ENCODE measurements at regions of chr4 and their contacts with region 1.

Region 1: GRCh38 chr4:973431-974397 is at the start of gene DGKQ:
- DNase-seq: peak; percentile 96
- H3K4me3 ChIP-seq: peak within 1 kb of the TSS; percentile 72 to 95 (median 82)
- H3K27ac ChIP-seq: peak within 1 kb of the TSS in 7 of 8 donors; percentile 7 to 77 (median 51)
- H3K4me1 ChIP-seq: peaks cover 13 to 57% (median 37%) of the 10 kb centered on the region in 6 donors
- H3K27me3 ChIP-seq: peaks cover 0 to 5% (median 0%) of the 10 kb centered on the region in 7 donors
- CTCF ChIP-seq: no peak
- POLR2A ChIP-seq: no peak
- total RNA-seq, gene DGKQ: 13.6 to 26.3 (median 17.0) TPM

Region 2: GRCh38 chr4:931960-932712 is 41.6 kb before region 1 on chr4 and contains the starts of genes GAK and TMEM175:
- intact Hi-C with region 1: loop called (anchors 5 kb)
- DNase-seq: peak; percentile 99
- H3K4me3 ChIP-seq: peak within 1 kb of the TSS; percentile 75 to 99 (median 92)
- H3K27ac ChIP-seq: peak within 1 kb of the TSS; percentile 84 to 98 (median 94)
- H3K4me1 ChIP-seq: peaks cover 40 to 89% (median 81%) of the 10 kb centered on the region in 6 donors
- H3K27me3 ChIP-seq: no peaks in the 10 kb centered on the region
- CTCF ChIP-seq: peak in 6 of 11 experiments; percentile 24 to 56 (median 41)
- POLR2A ChIP-seq: peak in 2 of 3 donors; percentile 62 to 67
- total RNA-seq, gene GAK: 154 to 212 (median 179) TPM
- total RNA-seq, gene TMEM175: 38.2 to 76.8 (median 56.6) TPM

Measured in spleen (tissue), 13 donors.